Cardiac septum (tissue), 1 donor: ENCODE measurements at regions of chr14 and their contacts with region 1.

Region 1: GRCh38 chr14:103085106-103086091 is 1.4 kb downstream of the LBHD2 start:
- DNase-seq: no peak

Region 2: GRCh38 chr14:103056322-103057027 is 28.9 kb before region 1 on chr14:
- intact Hi-C with region 1: no loop called
- DNase-seq: peak; percentile 82

Region 3: GRCh38 chr14:103472939-103473338 is 387.5 kb after region 1 on chr14:
- intact Hi-C with region 1: loop called (anchors 10 kb)
- DNase-seq: no peak